Right ventricle myocardium inferior (tissue), 1 donor: ENCODE measurements at regions of chr9 and their contacts with region 1.

Region 1: GRCh38 chr9:35481347-35481975 is 8.4 kb upstream of the RUSC2 start:
- DNase-seq: no peak
- ATAC-seq: no peak

Region 2: DNA sequence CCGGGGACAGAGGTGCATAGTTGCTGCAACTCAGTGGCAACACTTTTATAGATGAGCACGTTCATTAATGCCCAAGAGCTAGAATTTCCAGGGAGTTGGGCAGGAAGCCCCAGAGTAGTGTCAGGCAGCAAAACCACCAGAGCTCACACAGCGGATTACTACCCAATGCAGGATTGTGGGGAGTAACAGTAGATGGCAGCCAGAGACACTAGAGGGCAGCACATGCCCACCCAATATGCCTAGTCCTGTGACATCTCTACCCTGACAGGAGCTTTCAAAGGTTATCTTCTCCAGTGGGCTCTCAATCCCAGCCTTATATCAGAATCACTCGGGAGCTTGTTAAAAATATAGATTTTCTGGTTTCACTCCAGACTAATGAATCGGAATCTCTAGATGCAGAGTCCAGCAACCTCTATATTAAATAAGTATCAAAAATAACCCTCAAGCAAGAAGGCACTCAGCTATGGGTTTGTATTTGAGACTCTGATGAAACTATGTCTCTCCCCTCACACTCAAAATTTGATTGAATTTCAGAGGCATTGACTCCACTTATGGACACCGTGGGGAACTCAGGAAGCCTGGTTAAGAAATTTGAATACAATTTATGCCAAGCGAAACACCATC is 581.8 kb before region 1 on chr9:
- intact Hi-C with region 1: loop called (anchors 5 kb)
- DNase-seq: peak; percentile 81
- ATAC-seq: peak; percentile 97

Region 3: DNA sequence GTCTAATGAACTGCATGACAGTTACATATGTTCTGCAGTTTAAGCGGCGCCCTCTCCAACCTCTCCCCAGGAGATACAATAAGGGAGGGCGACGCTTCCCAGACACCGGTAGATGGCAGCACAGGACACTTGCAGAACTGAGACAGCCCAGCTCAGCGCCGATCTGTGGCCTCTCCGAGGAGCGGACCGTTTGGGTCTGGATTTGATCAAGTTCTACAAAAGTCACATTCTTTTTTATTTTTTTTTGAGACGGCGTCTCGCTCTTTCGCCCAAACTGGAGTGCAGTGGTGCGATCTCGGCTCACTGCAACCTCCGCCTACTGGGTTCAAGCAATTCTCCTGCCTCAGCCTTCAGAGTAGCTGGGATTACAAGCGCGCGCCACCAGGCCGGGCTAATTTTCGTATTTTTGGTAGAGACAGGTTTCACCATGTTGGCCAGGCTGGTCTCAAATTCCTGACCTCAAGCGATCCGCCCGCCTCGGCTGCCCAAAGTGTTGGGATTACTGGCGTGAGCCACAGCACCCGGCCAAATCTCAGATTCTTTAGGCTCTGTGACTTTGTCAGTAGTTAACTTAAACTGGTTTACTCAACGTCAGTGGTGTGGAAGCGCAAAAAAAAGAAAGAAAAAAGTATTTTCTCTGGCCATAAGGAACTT is 364.4 kb before region 1 on chr9:
- intact Hi-C with region 1: loop called (anchors 2 kb)
- DNase-seq: peak; percentile 94
- ATAC-seq: peak; percentile 83

Region 4: GRCh38 chr9:35311891-35312639 is 169.4 kb before region 1 on chr9:
- intact Hi-C with region 1: loop called (anchors 1 kb)
- DNase-seq: no peak
- ATAC-seq: peak; percentile 93

Region 5: GRCh38 chr9:35395076-35395705 is 86.3 kb before region 1 on chr9:
- intact Hi-C with region 1: no loop called
- DNase-seq: no peak
- ATAC-seq: peak; percentile 60

Region 6: GRCh38 chr9:35553670-35554543 is 72.4 kb after region 1 on chr9:
- intact Hi-C with region 1: loop called (anchors 2 kb)
- DNase-seq: no peak
- ATAC-seq: peak; percentile 90